T-cell (primary cell): ENCODE measurements at regions of chr6 and their contacts with region 1.

Region 1: DNA sequence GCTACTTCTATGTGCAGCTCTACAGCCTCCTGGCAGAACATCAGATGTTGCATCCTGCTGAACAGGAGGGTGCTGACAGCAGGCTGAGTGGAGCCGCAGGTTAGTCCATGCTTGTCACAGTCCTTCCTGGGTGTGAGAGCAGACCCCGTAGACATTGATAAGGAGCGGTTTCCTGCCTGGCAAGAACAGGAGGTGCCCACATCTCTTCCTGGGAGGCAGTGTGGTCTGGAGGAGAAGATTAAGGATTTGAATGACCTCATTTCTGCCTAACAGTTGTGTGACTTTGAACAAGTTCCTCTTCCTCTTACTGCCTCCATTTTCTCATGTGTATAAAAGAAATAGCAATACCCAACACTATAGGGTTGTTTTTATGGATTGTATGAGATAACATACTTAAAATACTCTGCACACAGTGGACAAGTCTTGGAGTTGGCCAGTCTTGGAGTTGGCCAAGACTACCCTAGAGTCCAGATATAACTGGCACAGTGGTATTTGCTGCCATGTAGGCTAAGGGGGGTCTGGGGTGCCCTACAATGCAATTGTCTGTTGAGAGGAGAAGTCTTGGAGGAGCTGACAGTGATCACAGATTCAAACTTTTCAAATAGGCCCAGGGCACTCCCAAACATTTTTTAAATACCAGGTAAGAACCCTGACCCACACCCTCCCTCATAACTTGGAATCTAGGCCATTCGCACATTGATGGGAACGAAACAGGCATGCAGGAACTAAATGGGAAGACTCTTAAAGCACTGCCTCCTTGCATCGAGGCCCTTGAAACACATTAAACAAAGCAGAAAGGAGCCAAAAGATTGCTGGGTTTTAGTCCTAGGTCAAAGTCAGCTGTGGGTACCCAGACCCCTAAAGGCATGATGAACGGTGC is 32.6 kb upstream of the TBC1D7 start:
- DNase-seq: no peak
- ATAC-seq: no peak
- H3K4me3 ChIP-seq: no peak overlapping the region
- H3K4me3 Mint-ChIP-seq: no peak overlapping the region
- H3K27ac ChIP-seq: no peak overlapping the region
- H3K27ac Mint-ChIP-seq: no peak overlapping the region
- H3K4me1 ChIP-seq: peaks cover 9 to 13% of the 10 kb centered on the region in 2 experiments
- H3K4me1 Mint-ChIP-seq: peaks cover 10 to 25% (median 23%) of the 10 kb centered on the region in 3 donors
- H3K27me3 ChIP-seq: no peaks in the 10 kb centered on the region
- H3K27me3 Mint-ChIP-seq: no peaks in the 10 kb centered on the region

Region 2: GRCh38 chr6:13500264-13500663 is 139.4 kb after region 1 on chr6:
- CTCF ChIA-PET with region 1: no interaction called
- POLR2A ChIA-PET with region 1: no interaction called
- DNase-seq: no peak
- ATAC-seq: no peak
- H3K4me3 ChIP-seq: no peak overlapping the region
- H3K4me3 Mint-ChIP-seq: no peak overlapping the region
- H3K27ac ChIP-seq: no peak overlapping the region
- H3K27ac Mint-ChIP-seq: no peak overlapping the region
- H3K4me1 ChIP-seq: no peaks in the 10 kb centered on the region
- H3K4me1 Mint-ChIP-seq: no peaks in the 10 kb centered on the region
- H3K27me3 ChIP-seq: no peaks in the 10 kb centered on the region
- H3K27me3 Mint-ChIP-seq: no peaks in the 10 kb centered on the region

Region 3: DNA sequence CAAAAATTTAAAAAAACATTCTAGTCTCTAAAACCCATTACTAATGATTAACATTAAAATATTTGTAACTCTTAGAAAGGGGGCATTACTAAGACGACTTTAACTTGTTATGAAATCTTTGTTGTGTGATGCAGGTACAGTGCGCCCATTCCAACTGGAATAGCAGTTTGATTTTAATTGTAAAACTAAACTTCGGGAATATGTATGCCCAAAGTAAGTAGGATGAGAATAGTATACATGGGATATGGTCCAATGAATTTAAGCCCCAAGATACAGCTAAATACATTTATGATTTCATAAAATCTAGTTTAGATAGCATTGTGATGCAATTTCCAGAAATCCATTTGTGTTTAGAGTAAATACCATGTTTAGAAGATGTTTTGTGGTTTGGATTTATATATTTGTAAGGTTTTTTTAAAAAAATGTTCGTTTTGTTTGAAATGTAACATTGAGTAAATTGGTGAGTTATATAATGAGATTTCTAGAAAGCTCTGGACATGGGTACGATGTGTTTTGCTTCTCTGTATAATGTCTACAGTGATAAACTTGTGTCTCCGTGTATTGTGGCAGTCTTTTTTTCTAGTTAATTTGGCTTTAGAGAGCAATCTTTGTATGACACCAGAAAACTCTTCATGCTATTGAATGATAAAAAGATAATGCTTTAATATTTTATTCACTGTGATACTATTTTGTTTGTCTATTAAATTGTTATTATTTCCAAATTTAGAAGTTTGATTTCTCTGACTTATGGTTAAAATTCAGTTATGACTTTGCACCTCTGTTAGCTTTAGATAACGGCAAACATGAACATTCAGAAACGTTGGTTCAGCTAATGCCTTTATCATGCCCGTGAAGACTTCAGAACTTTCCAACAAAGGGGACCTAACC is 618.6 kb after region 1 on chr6:
- CTCF ChIA-PET with region 1: no interaction called
- POLR2A ChIA-PET with region 1: interaction called in 1 of 2 experiments, 13 read pairs
- DNase-seq: no peak
- ATAC-seq: no peak
- H3K4me3 ChIP-seq: no peak overlapping the region
- H3K4me3 Mint-ChIP-seq: no peak overlapping the region
- H3K27ac ChIP-seq: no peak overlapping the region
- H3K27ac Mint-ChIP-seq: no peak overlapping the region
- H3K4me1 ChIP-seq: no peaks in the 10 kb centered on the region
- H3K4me1 Mint-ChIP-seq: no peaks in the 10 kb centered on the region
- H3K27me3 ChIP-seq: peaks cover 0 to 11% of the 10 kb centered on the region in 2 experiments
- H3K27me3 Mint-ChIP-seq: peaks cover 38 to 41% of the 10 kb centered on the region in 2 donors